CD14-positive monocyte (primary cell): ENCODE measurements at regions of chr10 and their contacts with region 1.

Region 1: GRCh38 chr10:27661514-27662286 is 83.9 kb downstream of the MKX start:
- DNase-seq: peak in 1 of 3 donors; percentile 24
- H3K4me3 ChIP-seq: peak overlapping the region in 1 of 3 experiments; percentile 60
- H3K4me3 Mint-ChIP-seq: no peak overlapping the region
- H3K27ac ChIP-seq: peak overlapping the region; percentile 60 to 82
- H3K27ac Mint-ChIP-seq: peak overlapping the region in 6 of 7 donors; percentile 20 to 96 (median 84)
- H3K4me1 ChIP-seq: peaks cover 55 to 60% of the 10 kb centered on the region in 2 donors
- H3K4me1 Mint-ChIP-seq: peaks cover 63% of the 10 kb centered on the region
- H3K27me3 ChIP-seq: no peaks in the 10 kb centered on the region
- H3K27me3 Mint-ChIP-seq: peaks cover 0 to 7% (median 4%) of the 10 kb centered on the region in 3 donors
- CTCF ChIP-seq: no peak

Region 2: GRCh38 chr10:27446091-27446918 is 215.4 kb before region 1 on chr10:
- intact Hi-C with region 1: loop called (anchors 5 kb)
- DNase-seq: peak in 2 of 3 donors; percentile 19 to 44
- H3K4me3 ChIP-seq: no peak overlapping the region
- H3K4me3 Mint-ChIP-seq: peak overlapping the region in 1 of 2 donors; percentile 51
- H3K27ac ChIP-seq: peak overlapping the region in 1 of 2 donors; percentile 68
- H3K27ac Mint-ChIP-seq: peak overlapping the region in 4 of 7 donors; percentile 61 to 90 (median 67)
- H3K4me1 ChIP-seq: peaks cover 33 to 53% of the 10 kb centered on the region in 2 donors
- H3K4me1 Mint-ChIP-seq: peaks cover 46% of the 10 kb centered on the region
- H3K27me3 ChIP-seq: no peaks in the 10 kb centered on the region
- H3K27me3 Mint-ChIP-seq: peaks cover 0 to 3% (median 1%) of the 10 kb centered on the region in 3 donors
- CTCF ChIP-seq: peak; percentile 68

Region 3: GRCh38 chr10:27558612-27559020 is 103.1 kb before region 1 on chr10:
- intact Hi-C with region 1: loop called in 1 of 2 experiments (anchors 5 kb)
- DNase-seq: peak; percentile 46 to 66 (median 59)
- H3K4me3 ChIP-seq: no peak overlapping the region
- H3K4me3 Mint-ChIP-seq: no peak overlapping the region
- H3K27ac ChIP-seq: no peak overlapping the region
- H3K27ac Mint-ChIP-seq: peak overlapping the region in 1 of 7 donors; percentile 7
- H3K4me1 ChIP-seq: no peaks in the 10 kb centered on the region
- H3K4me1 Mint-ChIP-seq: no peaks in the 10 kb centered on the region
- H3K27me3 ChIP-seq: no peaks in the 10 kb centered on the region
- H3K27me3 Mint-ChIP-seq: peaks cover 0 to 5% (median 0%) of the 10 kb centered on the region in 3 donors
- CTCF ChIP-seq: peak; percentile 76

Region 4: DNA sequence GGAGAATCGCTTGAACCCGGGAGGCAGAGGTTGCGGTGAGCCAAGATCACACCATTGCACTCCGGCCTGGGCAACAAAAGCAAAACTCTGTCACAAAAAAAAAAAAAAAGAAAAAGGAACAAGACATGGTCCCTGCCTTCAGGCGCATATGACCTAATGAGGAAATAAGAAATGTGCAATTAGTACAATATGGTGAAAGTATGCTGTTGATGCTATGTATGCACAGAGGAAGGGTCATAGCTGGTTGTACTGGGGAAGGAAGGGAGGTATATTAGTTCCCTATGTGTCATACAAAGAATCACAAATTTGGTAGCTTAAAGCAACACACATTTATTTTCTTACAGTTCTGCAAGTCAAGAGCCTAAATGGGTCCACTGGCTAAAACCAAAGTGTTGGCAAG is 739.0 kb after region 1 on chr10:
- intact Hi-C with region 1: loop called in 1 of 2 experiments (anchors 10 kb)
- DNase-seq: peak; percentile 91 to 95 (median 95)
- H3K4me3 ChIP-seq: peak overlapping the region in 1 of 3 experiments; percentile 45
- H3K4me3 Mint-ChIP-seq: peak overlapping the region; percentile 51 to 58
- H3K27ac ChIP-seq: peak overlapping the region; percentile 98 to 100
- H3K27ac Mint-ChIP-seq: peak overlapping the region; percentile 96 to 100 (median 99)
- H3K4me1 ChIP-seq: peaks cover 68 to 81% of the 10 kb centered on the region in 2 donors
- H3K4me1 Mint-ChIP-seq: peaks cover 78% of the 10 kb centered on the region
- H3K27me3 ChIP-seq: no peaks in the 10 kb centered on the region
- H3K27me3 Mint-ChIP-seq: peaks cover 0 to 3% (median 3%) of the 10 kb centered on the region in 3 donors
- CTCF ChIP-seq: no peak